IMR-90 (cell line): ENCODE measurements at regions of chr2 and their contacts with region 1.

Region 1: GRCh38 chr2:120182019-120182560 is 41.1 kb downstream of the TMEM185B start:
- DNase-seq: no peak
- ATAC-seq: no peak
- H3K4me3 ChIP-seq: no peak overlapping the region
- H3K27ac ChIP-seq: no peak overlapping the region
- H3K4me1 ChIP-seq: peaks cover 2% of the 10 kb centered on the region; the same call in 1 of the 2 replicates
- H3K27me3 ChIP-seq: no peaks in the 10 kb centered on the region
- CTCF ChIP-seq: no peak
- POLR2A ChIP-seq: no peak
- RAD21 ChIP-seq: no peak

Region 2: DNA sequence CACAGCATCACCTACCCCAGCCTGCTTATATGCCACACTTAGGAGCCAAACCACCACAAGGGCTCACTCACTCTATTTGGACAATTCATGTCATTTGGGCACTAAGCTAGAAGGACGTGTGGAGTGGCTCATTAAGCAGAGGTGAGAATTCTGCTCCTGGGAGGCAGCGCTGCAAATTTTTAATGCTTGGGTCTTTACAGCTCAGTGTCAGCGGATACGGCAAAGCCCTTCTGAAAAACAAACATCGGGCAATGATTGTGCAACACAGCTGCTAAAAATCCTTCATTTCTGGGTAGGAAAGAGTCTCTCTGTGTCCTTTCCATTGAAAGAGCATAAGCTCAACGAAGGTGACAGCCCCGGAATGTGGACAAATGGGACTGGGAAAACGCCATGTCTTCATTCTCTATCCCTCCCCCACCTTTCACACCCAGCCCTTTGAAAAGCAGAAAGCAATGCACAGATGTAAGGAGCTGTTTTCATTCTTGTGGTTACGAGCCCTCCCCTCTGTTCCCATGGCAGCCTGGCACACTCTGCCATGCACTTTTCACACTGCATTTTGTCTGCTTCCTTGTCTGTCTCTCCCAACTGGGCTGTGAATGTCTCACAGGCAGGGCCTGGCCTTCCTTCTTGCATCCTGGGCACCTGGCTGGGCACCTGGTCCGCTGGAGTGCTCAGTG is 487.1 kb before region 1 on chr2:
- CTCF ChIA-PET with region 1: no interaction called
- POLR2A ChIA-PET with region 1: no interaction called
- dilution Hi-C with region 1: no loop called
- in situ Hi-C with region 1: loop called (anchors 5 kb)
- intact Hi-C with region 1: no loop called
- DNase-seq: peak; percentile 54
- ATAC-seq: peak; percentile 80
- H3K4me3 ChIP-seq: no peak overlapping the region
- H3K27ac ChIP-seq: no peak overlapping the region
- H3K4me1 ChIP-seq: peaks cover 6% of the 10 kb centered on the region
- H3K27me3 ChIP-seq: peaks cover 25% of the 10 kb centered on the region
- CTCF ChIP-seq: no peak
- POLR2A ChIP-seq: no peak
- RAD21 ChIP-seq: no peak